Endothelial cell of umbilical vein (primary cell): ENCODE measurements at regions of chr16 and their contacts with region 1.

Region 1: GRCh38 chr16:81755915-81756614 is 23.0 kb upstream of the PLCG2 start:
- DNase-seq: peak; percentile 78
- H3K4me3 ChIP-seq: no peak overlapping the region
- H3K27ac ChIP-seq: peak overlapping the region; percentile 47
- H3K4me1 ChIP-seq: peaks cover 18% of the 10 kb centered on the region
- H3K27me3 ChIP-seq: no peaks in the 10 kb centered on the region
- CTCF ChIP-seq: peak in 1 of 2 donors; percentile 24
- POLR2A ChIP-seq: no peak

Region 2: GRCh38 chr16:81478876-81479511 is 277.1 kb before region 1 on chr16:
- CTCF ChIA-PET with region 1: no interaction called
- POLR2A ChIA-PET with region 1: no interaction called
- dilution Hi-C with region 1: no loop called
- intact Hi-C with region 1: no loop called
- DNase-seq: peak; percentile 90
- H3K4me3 ChIP-seq: peak overlapping the region in 1 of 3 experiments; percentile 4
- H3K27ac ChIP-seq: peak overlapping the region; percentile 44
- H3K4me1 ChIP-seq: peaks cover 43% of the 10 kb centered on the region
- H3K27me3 ChIP-seq: no peaks in the 10 kb centered on the region
- CTCF ChIP-seq: no peak
- POLR2A ChIP-seq: no peak

Region 3: GRCh38 chr16:81723098-81723723 is 32.9 kb before region 1 on chr16:
- CTCF ChIA-PET with region 1: no interaction called
- POLR2A ChIA-PET with region 1: no interaction called
- dilution Hi-C with region 1: no loop called
- intact Hi-C with region 1: no loop called
- DNase-seq: peak; percentile 85
- H3K4me3 ChIP-seq: no peak overlapping the region
- H3K27ac ChIP-seq: no peak overlapping the region
- H3K4me1 ChIP-seq: peaks cover 7% of the 10 kb centered on the region
- H3K27me3 ChIP-seq: peaks cover 0 to 3% of the 10 kb centered on the region in 2 experiments
- CTCF ChIP-seq: peak; percentile 47 to 53
- POLR2A ChIP-seq: no peak

Region 4: DNA sequence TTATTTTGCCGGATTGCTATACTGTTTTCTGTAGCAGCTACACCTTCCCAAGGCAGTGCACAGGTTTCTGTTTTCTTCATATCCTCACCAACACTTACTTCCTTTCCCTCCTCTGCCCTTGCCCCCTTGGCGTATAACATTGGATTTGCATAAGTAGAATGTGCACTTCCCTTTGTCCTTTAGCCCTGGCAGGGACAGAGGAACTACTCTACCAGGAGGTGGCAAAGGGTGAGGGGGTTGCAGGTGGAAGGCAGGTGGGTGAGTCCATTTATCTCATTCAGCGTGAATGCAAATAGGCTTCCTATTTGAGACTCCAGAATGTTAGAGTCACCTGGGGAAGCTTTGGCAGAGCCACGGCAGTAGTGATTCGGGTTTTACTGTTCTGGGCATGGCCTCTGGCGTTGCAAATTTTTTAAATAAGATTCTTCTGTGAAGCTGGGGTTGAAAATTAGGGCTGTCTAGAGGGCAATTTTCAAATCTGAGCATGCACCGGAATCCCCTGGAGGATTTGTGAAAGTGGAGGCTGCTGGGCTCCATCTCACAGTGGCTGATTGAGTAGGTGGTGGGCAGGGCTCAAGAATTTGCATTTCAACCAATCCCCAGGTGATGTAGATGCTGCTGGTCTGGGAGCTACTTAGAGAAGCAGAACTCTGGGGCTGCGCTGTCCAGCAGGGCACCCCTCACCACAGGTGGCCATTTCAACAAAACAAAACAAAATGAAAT is 107.7 kb after region 1 on chr16:
- CTCF ChIA-PET with region 1: no interaction called
- POLR2A ChIA-PET with region 1: no interaction called
- dilution Hi-C with region 1: no loop called
- intact Hi-C with region 1: loop called (anchors 1 kb)
- DNase-seq: no peak
- H3K4me3 ChIP-seq: no peak overlapping the region
- H3K27ac ChIP-seq: no peak overlapping the region
- H3K4me1 ChIP-seq: peaks cover 25% of the 10 kb centered on the region
- H3K27me3 ChIP-seq: no peaks in the 10 kb centered on the region
- CTCF ChIP-seq: no peak
- POLR2A ChIP-seq: no peak